Activated T-helper 2 cell treated with anti-CD3 and anti-CD28 coated beads, Interferon-gamma antibody, Interleukin-2, Interleukin-4, amounts not matched to agents 10 μg/mL and 5 μg/mL and 100 μg/mL, durations not matched to agents 14 hours and 24 hours and 36 hours (primary cell): ENCODE measurements at regions of chr7 and their contacts with region 1.

Region 1: GRCh38 chr7:112789817-112790585 is at the start of gene TMEM168:
- DNase-seq: peak; percentile 79
- H3K4me3 Mint-ChIP-seq: peak within 1 kb of the TSS; percentile 93
- H3K27ac Mint-ChIP-seq: peak within 1 kb of the TSS; percentile 86
- H3K4me1 Mint-ChIP-seq: peaks cover 31% of the 10 kb centered on the region
- H3K27me3 Mint-ChIP-seq: no peaks in the 10 kb centered on the region
- total RNA-seq, gene TMEM168: 16.3 and 17.7 TPM in 2 replicates

Region 2: GRCh38 chr7:112449902-112450806 is 339.8 kb before region 1 on chr7 and contains the start of gene IFRD1:
- intact Hi-C with region 1: loop called (anchors 5 kb)
- DNase-seq: peak; percentile 96
- H3K4me3 Mint-ChIP-seq: peak within 1 kb of the TSS; percentile 97
- H3K27ac Mint-ChIP-seq: peak within 1 kb of the TSS; percentile 98
- H3K4me1 Mint-ChIP-seq: peaks cover 50% of the 10 kb centered on the region
- H3K27me3 Mint-ChIP-seq: no peaks in the 10 kb centered on the region
- total RNA-seq, gene IFRD1: 49.5 and 51.7 TPM in 2 replicates

Region 3: GRCh38 chr7:112510001-112510742 is 279.8 kb before region 1 on chr7:
- intact Hi-C with region 1: loop called (anchors 10 kb)
- DNase-seq: no peak
- H3K4me3 Mint-ChIP-seq: no peak overlapping the region
- H3K27ac Mint-ChIP-seq: peak overlapping the region; percentile 44
- H3K4me1 Mint-ChIP-seq: peaks cover 21% of the 10 kb centered on the region
- H3K27me3 Mint-ChIP-seq: no peaks in the 10 kb centered on the region

Region 4: DNA sequence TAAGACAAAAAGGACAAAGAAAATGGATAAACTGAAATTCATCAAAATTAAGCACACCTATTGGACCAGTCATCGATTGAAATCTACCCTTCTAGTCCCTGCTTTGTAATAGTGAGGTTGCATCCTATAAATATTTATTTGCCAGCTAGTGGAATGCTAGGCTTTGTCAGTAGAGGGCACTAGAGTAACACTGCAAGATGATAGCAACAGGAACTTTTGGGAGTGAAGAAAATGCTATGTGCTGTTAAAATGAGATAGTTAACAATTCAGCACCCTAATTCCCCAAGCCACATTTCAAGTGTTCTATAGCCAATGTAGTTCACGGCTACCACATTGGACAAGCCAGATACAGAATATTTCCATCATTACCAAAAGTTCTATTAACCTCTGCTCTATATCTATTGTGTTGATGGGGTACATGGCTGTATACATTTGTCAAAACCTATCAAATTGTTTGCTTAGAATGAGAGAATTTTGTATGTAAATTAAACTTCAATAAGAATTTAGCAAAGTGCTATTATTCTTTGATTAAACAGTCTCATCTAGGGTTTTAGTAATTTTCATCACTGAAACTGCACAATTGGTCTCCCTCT is 239.4 kb before region 1 on chr7:
- intact Hi-C with region 1: loop called (anchors 10 kb)
- DNase-seq: no peak
- H3K4me3 Mint-ChIP-seq: no peak overlapping the region
- H3K27ac Mint-ChIP-seq: no peak overlapping the region
- H3K4me1 Mint-ChIP-seq: no peaks in the 10 kb centered on the region
- H3K27me3 Mint-ChIP-seq: peaks cover 4% of the 10 kb centered on the region

Region 5: DNA sequence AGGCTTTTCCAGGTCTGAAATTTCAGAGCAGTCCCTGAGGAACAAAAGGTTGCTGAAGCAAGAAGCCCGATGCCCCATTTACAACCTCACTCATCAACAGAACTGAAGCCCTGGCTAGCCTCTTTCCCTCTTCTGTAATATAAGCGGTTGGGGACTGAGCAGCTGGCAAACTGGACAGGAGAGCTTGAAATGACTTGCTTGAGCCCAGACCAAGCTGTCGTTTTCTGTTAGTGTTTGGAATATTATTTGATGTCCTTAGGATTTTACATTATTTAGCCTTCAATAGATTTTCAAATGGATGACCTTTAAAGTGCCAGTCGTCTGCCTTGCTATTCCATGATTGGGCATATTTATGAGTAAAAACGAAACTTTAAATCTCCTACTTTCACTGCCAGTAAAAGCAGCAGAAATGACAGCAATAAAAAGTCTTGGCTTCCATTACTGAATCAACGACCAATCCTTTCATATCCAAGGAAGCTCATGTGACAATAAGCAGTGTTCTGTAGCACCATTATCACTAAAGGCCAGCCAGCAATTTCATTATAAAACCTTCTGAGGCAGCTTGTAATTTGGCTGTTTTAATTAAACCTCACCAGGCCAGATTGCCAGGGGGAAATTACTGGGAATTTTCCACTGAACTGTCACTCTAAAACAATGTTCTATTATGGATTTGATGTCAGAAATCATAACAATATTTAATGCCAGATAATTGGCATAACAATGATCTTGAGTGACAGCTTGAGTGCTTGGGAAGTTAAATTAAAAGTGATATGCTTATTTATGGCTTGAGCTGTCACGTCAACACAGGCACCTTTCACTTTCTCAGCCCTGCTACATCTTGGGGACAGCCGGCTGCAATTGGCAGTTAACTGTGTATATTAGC is 223.3 kb before region 1 on chr7:
- intact Hi-C with region 1: no loop called
- DNase-seq: no peak
- H3K4me3 Mint-ChIP-seq: no peak overlapping the region
- H3K27ac Mint-ChIP-seq: no peak overlapping the region
- H3K4me1 Mint-ChIP-seq: no peaks in the 10 kb centered on the region
- H3K27me3 Mint-ChIP-seq: peaks cover 7% of the 10 kb centered on the region

Region 6: GRCh38 chr7:112939574-112940314 is 149.7 kb after region 1 on chr7:
- intact Hi-C with region 1: loop called (anchors 2 kb)
- DNase-seq: peak; percentile 99
- H3K4me3 Mint-ChIP-seq: peak overlapping the region; percentile 91
- H3K27ac Mint-ChIP-seq: peak overlapping the region; percentile 94
- H3K4me1 Mint-ChIP-seq: peaks cover 27% of the 10 kb centered on the region
- H3K27me3 Mint-ChIP-seq: peaks cover 4% of the 10 kb centered on the region

Region 7: GRCh38 chr7:113307147-113307546 is 517.1 kb after region 1 on chr7:
- intact Hi-C with region 1: no loop called
- DNase-seq: no peak
- H3K4me3 Mint-ChIP-seq: no peak overlapping the region
- H3K27ac Mint-ChIP-seq: no peak overlapping the region
- H3K4me1 Mint-ChIP-seq: peaks cover 2% of the 10 kb centered on the region
- H3K27me3 Mint-ChIP-seq: no peaks in the 10 kb centered on the region